Activated naive CD4-positive, alpha-beta T cell treated with anti-CD3 and anti-CD28 coated beads, Interleukin-2, amount 10 ng/mL, durations not matched to agents 7 days and 5 days (primary cell): ENCODE measurements at regions of chr5 and their contacts with region 1.

Region 1: DNA sequence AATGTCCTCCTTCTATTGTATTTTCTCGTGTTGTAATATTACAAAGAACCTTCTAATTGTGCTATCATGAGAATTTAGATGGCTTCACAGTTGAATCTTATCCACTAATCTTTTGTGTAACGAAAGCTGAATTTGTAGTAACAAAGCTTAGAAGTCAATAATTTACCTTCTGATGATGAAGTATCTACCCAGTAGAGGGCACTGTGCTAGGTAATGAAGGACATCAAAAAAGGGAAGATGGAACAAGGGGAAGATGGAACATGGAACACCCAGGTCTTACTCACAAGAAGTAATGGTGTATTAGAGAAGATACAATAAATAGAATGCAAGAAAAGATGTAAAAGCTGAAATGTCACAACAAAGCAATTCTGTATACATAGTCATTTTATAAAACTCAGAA is 131.0 kb upstream of the CCNG1 start:
- DNase-seq: no peak
- H3K4me3 Mint-ChIP-seq: no peak overlapping the region
- H3K27ac Mint-ChIP-seq: no peak overlapping the region
- H3K4me1 Mint-ChIP-seq: peaks cover 7% of the 10 kb centered on the region
- H3K27me3 Mint-ChIP-seq: no peaks in the 10 kb centered on the region

Region 2: DNA sequence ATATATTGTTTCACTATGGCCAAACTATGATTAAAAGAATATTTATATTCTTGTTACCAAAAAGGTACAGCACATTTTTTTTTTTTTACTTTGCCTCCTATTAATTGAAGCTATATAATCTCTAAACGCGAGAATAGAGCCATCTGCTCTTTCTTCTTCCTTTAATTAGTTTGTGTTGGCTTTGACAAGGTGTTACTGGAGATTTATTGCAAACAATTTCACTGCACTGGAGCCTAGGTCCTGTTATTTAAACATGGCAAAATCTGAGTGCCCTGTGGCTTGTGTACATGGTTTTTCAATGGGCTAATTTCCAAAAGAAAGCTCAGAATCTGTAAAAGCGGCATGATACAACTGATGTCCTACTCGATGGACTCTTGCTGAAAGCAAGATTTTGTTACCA is 1279.6 kb before region 1 on chr5:
- CTCF ChIA-PET with region 1: no interaction called
- DNase-seq: no peak
- H3K4me3 Mint-ChIP-seq: no peak overlapping the region
- H3K27ac Mint-ChIP-seq: no peak overlapping the region
- H3K4me1 Mint-ChIP-seq: no peaks in the 10 kb centered on the region
- H3K27me3 Mint-ChIP-seq: no peaks in the 10 kb centered on the region

Region 3: DNA sequence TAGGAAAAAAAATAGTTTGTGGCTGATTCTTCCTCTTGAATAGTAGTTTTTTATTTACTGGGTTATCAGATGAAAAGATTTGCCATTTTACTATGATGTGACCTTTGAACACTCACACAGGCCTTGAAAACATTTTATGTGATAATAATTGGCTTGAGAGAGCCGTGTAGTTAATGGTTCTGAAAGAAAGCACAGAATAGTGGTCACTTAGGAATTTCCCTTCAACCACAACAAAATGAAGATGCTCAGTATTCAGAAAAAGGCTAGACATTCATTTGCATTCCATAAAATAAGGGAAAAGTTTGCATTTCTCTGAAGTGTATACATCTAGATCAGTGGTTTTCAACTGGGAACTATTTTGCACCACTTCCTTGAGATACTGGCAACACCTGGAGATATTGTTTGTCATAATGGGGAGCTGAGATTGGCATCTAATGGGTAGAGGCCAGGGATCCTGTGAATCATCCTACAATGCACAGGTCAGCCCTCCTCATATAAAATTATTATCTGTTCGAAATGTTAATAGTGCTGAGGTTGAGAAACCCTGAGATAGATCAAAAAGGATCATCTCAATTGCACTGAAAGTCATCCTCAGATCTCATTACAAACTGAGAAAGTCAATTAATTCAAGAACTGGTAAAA is 315.4 kb before region 1 on chr5:
- CTCF ChIA-PET with region 1: no interaction called
- DNase-seq: no peak
- H3K4me3 Mint-ChIP-seq: no peak overlapping the region
- H3K27ac Mint-ChIP-seq: no peak overlapping the region
- H3K4me1 Mint-ChIP-seq: no peaks in the 10 kb centered on the region
- H3K27me3 Mint-ChIP-seq: no peaks in the 10 kb centered on the region

Region 4: GRCh38 chr5:163177971-163178370 is 128.4 kb before region 1 on chr5:
- CTCF ChIA-PET with region 1: no interaction called
- DNase-seq: no peak
- H3K4me3 Mint-ChIP-seq: no peak overlapping the region
- H3K27ac Mint-ChIP-seq: no peak overlapping the region
- H3K4me1 Mint-ChIP-seq: no peaks in the 10 kb centered on the region
- H3K27me3 Mint-ChIP-seq: no peaks in the 10 kb centered on the region

Region 5: DNA sequence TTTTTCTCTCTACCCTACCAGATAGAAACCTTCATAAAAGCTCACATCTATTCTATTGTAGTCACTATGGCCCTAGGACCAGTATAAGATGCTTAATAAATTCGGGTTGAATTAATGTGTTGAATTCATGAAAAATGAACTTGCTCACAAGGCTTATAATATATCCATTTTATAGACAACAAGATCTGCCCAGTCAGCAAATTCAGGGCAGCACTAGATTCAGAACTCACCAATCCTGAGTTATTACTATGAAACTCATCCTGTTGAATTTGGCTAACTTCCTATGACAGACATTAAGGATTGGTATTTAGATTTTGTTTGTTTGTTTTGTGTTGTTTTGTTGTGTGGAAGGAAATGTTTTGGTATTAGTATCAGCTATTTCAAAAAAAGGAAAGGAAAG is 12.6 kb before region 1 on chr5:
- CTCF ChIA-PET with region 1: no interaction called
- DNase-seq: no peak
- H3K4me3 Mint-ChIP-seq: no peak overlapping the region
- H3K27ac Mint-ChIP-seq: no peak overlapping the region
- H3K4me1 Mint-ChIP-seq: no peaks in the 10 kb centered on the region
- H3K27me3 Mint-ChIP-seq: no peaks in the 10 kb centered on the region

Region 6: GRCh38 chr5:163347671-163348070 is 41.2 kb after region 1 on chr5:
- CTCF ChIA-PET with region 1: interaction called, 30 read pairs
- DNase-seq: peak; percentile 63
- H3K4me3 Mint-ChIP-seq: no peak overlapping the region
- H3K27ac Mint-ChIP-seq: no peak overlapping the region
- H3K4me1 Mint-ChIP-seq: no peaks in the 10 kb centered on the region
- H3K27me3 Mint-ChIP-seq: no peaks in the 10 kb centered on the region

Region 7: DNA sequence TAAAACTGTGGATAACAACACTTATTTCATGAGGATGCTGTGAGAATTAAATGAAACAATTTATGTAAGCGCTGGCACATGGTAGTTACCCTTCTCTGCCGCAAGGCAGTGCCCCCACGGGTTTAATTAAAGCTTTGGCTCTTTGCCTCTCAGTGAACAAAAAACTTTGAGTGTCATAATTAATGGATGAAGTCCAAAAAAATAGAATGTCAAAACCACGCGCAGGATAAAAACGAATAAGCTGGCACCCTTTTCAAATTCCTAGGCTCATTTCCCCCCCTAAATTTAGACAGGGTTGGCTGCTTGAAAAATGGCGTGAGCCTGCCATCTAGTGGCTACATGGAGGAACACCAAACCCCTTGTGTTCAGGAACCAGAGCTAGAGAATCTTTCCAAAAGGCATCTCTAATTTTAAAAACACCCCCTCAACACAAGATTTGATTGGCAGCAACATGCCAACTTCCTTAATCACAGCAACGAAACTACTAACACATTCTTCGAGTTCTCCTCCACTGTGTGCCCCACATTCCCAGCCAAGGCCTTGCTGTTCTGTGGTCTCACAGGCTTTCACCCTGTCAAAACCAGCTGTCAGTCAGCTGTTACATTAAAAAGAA is 102.0 kb after region 1 on chr5:
- CTCF ChIA-PET with region 1: interaction called, 17 read pairs
- DNase-seq: peak; percentile 68
- H3K4me3 Mint-ChIP-seq: no peak overlapping the region
- H3K27ac Mint-ChIP-seq: no peak overlapping the region
- H3K4me1 Mint-ChIP-seq: no peaks in the 10 kb centered on the region
- H3K27me3 Mint-ChIP-seq: peaks cover 4% of the 10 kb centered on the region